ENCODE measurements at regions of chr4 and their contacts with region 1.

Region 1: GRCh38 chr4:104930298-104930697 is 216.4 kb upstream of the TET2 start:
- DNase-seq: peak; percentile 51
- ATAC-seq: peak; percentile 54
- H3K4me3 ChIP-seq: no peak overlapping the region; the same call in 1 of the 2 replicates
- H3K27ac ChIP-seq: peak overlapping the region; percentile 62
- H3K4me1 ChIP-seq: peaks cover 14% of the 10 kb centered on the region
- H3K27me3 ChIP-seq: no peaks in the 10 kb centered on the region
- CTCF ChIP-seq: no peak
- EP300 ChIP-seq: no peak
- POLR2A ChIP-seq: no peak
- RAD21 ChIP-seq: no peak

Region 2: DNA sequence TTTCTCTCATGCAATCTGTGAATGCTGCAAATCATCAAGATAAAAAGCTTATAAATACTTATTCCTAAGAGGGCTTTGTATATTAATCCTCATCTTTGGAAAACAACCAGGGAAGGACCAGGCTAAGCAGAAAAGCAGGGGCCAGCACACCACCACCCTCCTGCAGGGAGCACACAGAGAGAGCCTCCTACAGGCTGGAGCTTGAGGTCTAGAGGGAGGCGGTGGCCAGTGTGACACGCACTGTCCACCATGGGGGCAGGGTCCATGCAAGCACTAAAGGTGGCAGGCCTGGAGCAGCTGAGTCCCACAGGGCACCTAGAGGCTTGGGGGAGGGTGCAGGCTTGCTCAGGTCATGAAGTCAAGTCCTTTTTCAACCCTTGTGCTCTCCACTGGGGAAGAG is 1447.4 kb before region 1 on chr4:
- CTCF ChIA-PET with region 1: no interaction called
- POLR2A ChIA-PET with region 1: no interaction called
- RAD21 ChIA-PET with region 1: no interaction called
- SMC1A ChIA-PET with region 1: no interaction called
- in situ Hi-C with region 1: no loop called
- intact Hi-C with region 1: no loop called
- DNase-seq: no peak
- ATAC-seq: no peak
- H3K4me3 ChIP-seq: no peak overlapping the region
- H3K27ac ChIP-seq: no peak overlapping the region
- H3K4me1 ChIP-seq: no peaks in the 10 kb centered on the region
- H3K27me3 ChIP-seq: no peaks in the 10 kb centered on the region
- CTCF ChIP-seq: no peak
- EP300 ChIP-seq: no peak
- POLR2A ChIP-seq: no peak
- RAD21 ChIP-seq: no peak

Region 3: DNA sequence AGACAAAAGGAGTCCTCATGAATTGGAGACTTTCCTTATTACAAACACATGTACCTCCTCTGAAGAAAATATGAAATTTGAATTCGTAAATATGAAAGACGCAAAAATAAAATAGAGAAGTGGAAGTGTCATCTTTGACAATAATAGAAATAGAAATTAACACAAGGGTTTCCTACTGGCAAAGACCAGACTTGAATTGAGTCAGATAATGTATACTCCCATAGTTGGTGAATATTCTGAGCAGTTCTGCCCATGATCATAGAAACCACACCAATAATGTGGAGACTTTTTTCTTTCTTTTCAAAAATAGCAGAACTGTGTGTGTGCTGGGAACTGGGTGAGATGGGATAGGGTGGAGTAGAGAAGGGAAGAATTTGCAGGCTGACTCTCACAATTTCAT is 61.3 kb before region 1 on chr4:
- CTCF ChIA-PET with region 1: interaction called, 3 read pairs
- POLR2A ChIA-PET with region 1: no interaction called
- RAD21 ChIA-PET with region 1: no interaction called
- SMC1A ChIA-PET with region 1: no interaction called
- in situ Hi-C with region 1: no loop called
- intact Hi-C with region 1: loop called (anchors 2 kb)
- DNase-seq: peak; percentile 79
- ATAC-seq: peak; percentile 93
- H3K4me3 ChIP-seq: peak overlapping the region; percentile 24; the same call in 1 of the 2 replicates
- H3K27ac ChIP-seq: peak overlapping the region; percentile 67
- H3K4me1 ChIP-seq: peaks cover 36% of the 10 kb centered on the region
- H3K27me3 ChIP-seq: no peaks in the 10 kb centered on the region
- CTCF ChIP-seq: no peak
- EP300 ChIP-seq: peak; percentile 92 to 96
- POLR2A ChIP-seq: no peak
- RAD21 ChIP-seq: peak; percentile 24; the same call in 1 of the 2 replicates

Region 4: DNA sequence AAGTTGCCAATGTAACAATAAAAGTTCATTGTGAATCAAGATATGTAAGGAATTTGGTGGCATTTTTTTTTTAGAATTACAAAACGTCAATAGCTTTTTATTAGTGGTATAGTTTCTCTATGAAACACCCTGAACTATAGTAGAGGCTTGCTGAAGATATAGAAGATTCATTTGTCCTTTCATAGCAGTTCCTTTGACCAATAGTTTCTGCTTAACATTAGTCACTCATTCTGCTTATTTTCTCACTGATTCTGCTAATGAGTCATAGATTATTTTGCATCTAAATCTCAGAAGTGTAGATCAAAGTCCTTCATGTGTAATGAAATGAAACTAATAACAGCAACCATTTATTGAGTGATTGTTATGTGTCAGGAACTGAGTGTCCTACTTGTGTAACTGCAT is 11.4 kb after region 1 on chr4:
- CTCF ChIA-PET with region 1: interaction called, 6 read pairs
- POLR2A ChIA-PET with region 1: no interaction called
- RAD21 ChIA-PET with region 1: interaction called, 3 read pairs
- SMC1A ChIA-PET with region 1: interaction called, 14 read pairs
- in situ Hi-C with region 1: no loop called
- intact Hi-C with region 1: no loop called
- DNase-seq: peak; percentile 37
- ATAC-seq: peak; percentile 80
- H3K4me3 ChIP-seq: no peak overlapping the region
- H3K27ac ChIP-seq: no peak overlapping the region
- H3K4me1 ChIP-seq: no peaks in the 10 kb centered on the region
- H3K27me3 ChIP-seq: no peaks in the 10 kb centered on the region
- CTCF ChIP-seq: no peak
- EP300 ChIP-seq: 0 out of 4 replicates have a peak, but pooled peaks of 1 of the 2 experiments have one; percentile 28
- POLR2A ChIP-seq: no peak
- RAD21 ChIP-seq: no peak

Region 5: GRCh38 chr4:105068516-105068915 is 138.2 kb after region 1 on chr4:
- CTCF ChIA-PET with region 1: no interaction called
- POLR2A ChIA-PET with region 1: no interaction called
- RAD21 ChIA-PET with region 1: no interaction called
- SMC1A ChIA-PET with region 1: no interaction called
- in situ Hi-C with region 1: no loop called
- intact Hi-C with region 1: no loop called
- DNase-seq: no peak
- ATAC-seq: no peak
- H3K4me3 ChIP-seq: no peak overlapping the region
- H3K27ac ChIP-seq: no peak overlapping the region
- H3K4me1 ChIP-seq: no peaks in the 10 kb centered on the region
- H3K27me3 ChIP-seq: no peaks in the 10 kb centered on the region
- CTCF ChIP-seq: no peak
- EP300 ChIP-seq: no peak
- POLR2A ChIP-seq: no peak
- RAD21 ChIP-seq: no peak

Region 6: DNA sequence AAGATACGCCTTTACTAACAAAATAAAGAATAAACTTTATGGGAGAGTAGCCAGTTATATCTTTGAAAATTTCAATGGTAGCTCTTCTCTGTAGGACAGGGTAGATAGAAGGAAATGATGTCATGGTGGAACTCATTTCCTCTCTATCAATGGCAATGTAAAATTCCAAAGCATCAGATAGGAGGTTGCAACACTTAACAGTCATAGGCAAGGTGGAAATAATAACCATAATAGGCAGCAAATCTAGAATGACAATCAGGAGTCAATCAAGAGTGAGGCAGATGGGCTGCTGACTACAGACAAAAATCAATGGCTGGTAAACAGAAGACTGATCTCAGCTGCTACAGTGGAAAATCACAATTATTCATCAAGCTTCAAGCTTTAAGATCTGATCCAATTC is 162.5 kb after region 1 on chr4:
- CTCF ChIA-PET with region 1: no interaction called
- POLR2A ChIA-PET with region 1: no interaction called
- RAD21 ChIA-PET with region 1: no interaction called
- SMC1A ChIA-PET with region 1: no interaction called
- in situ Hi-C with region 1: no loop called
- intact Hi-C with region 1: no loop called
- DNase-seq: no peak
- ATAC-seq: no peak
- H3K4me3 ChIP-seq: no peak overlapping the region
- H3K27ac ChIP-seq: no peak overlapping the region
- H3K4me1 ChIP-seq: no peaks in the 10 kb centered on the region
- H3K27me3 ChIP-seq: no peaks in the 10 kb centered on the region
- CTCF ChIP-seq: no peak
- EP300 ChIP-seq: no peak
- POLR2A ChIP-seq: no peak
- RAD21 ChIP-seq: no peak

Region 7: GRCh38 chr4:105236202-105236915 is 306.1 kb after region 1 on chr4:
- CTCF ChIA-PET with region 1: no interaction called
- POLR2A ChIA-PET with region 1: no interaction called
- RAD21 ChIA-PET with region 1: no interaction called
- SMC1A ChIA-PET with region 1: interaction called, 3 read pairs
- in situ Hi-C with region 1: no loop called
- intact Hi-C with region 1: loop called (anchors 10 kb)
- DNase-seq: peak; percentile 68
- ATAC-seq: peak; percentile 79
- H3K4me3 ChIP-seq: no peak overlapping the region
- H3K27ac ChIP-seq: peak overlapping the region; percentile 72
- H3K4me1 ChIP-seq: peaks cover 25% of the 10 kb centered on the region
- H3K27me3 ChIP-seq: no peaks in the 10 kb centered on the region
- CTCF ChIP-seq: no peak
- EP300 ChIP-seq: no peak
- POLR2A ChIP-seq: no peak
- RAD21 ChIP-seq: no peak

Measured in GM12878 (cell line).